Ascending aorta (tissue), 2 donors: ENCODE measurements at regions of chr18 and their contacts with region 1.

Region 1: DNA sequence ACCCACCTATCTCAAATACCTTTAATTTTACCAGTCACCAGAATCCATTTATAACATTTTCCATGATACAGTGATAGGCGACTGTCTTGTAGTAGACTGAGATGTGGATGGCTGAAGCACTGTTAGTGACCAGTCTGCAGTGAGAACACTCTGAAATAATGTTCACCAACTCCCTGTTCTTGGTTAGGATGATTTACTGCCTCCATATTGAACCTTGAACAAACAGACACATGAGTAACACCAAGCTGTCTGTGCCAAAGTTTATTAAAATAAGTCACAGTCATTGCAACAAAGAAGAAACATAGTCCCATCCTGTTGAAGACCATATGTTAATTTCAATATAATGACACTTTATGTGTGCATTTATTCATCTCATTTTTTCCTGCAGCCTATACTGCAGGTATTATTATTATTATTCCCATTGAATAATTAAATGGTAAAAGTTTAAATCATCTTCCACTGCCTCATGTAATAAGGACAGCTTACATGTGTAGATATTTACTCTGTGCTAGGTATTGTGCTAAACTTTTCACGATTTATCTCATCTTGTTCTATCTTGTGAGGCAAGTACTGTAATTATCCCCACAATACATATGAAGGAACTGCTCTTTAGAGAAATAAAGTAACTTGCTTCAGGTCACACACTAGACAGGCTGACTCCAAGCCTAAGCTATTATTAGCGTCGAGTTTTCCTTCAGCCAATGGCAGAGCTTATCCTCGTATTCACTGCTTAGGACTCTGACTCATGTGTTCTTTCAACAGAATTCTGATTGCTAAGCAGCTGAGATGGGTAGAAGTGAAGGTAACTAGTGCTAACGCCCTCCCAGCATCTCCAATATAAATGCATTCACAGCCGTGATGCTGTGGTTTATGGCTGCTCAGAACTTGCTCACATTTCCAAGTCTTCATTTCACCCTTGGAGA is 62.5 kb downstream of the ONECUT2 start:
- DNase-seq: no peak
- H3K4me3 ChIP-seq: no peak overlapping the region
- H3K27ac ChIP-seq: peak overlapping the region; percentile 34 to 55
- H3K4me1 ChIP-seq: peaks cover 0 to 10% of the 10 kb centered on the region in 2 donors
- H3K27me3 ChIP-seq: no peaks in the 10 kb centered on the region
- CTCF ChIP-seq: no peak

Region 2: DNA sequence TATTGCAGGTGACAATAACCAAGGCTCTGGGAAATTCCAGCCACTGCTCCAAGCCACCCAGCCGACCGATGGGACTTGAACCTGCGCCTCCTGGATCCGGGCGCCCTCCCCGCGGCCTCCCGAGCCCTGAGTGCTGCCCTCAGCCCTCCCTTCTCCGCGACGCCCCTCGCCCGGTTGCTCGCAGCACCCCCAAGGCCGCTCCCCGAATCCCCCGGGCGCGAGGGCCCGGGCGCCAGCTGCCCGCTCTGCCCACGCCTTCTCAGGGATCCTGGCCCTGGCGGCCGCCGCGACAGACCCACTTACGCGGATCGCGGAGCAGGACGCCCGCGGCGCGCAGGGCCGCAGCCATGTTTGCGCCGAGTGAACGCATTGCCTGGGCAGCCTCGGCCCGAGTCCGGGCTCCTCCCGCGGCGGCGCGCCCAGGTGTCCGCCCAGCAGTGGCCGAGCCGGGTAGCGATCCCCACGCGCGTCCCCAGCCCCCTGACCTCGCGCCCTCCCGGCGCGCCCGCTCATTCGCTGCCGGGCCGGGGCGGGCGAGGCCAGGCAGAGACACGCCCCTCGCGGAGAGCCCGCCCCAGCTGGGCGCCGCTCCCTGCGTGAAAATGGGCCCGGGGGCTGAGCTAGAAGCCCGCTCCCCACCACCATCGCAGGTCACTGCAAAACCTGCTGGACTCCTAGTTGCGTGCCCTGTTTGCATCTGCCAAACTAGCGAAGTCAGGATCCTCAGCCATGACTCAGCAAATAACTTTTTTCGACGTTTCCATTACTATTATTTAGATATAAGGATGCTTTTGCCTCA is 88.8 kb after region 1 on chr18 and contains the start of gene FECH:
- intact Hi-C with region 1: loop called (anchors 5 kb)
- DNase-seq: peak; percentile 26 to 89
- H3K4me3 ChIP-seq: peak within 1 kb of the TSS; percentile 83 to 90
- H3K27ac ChIP-seq: peak within 1 kb of the TSS; percentile 81 to 87
- H3K4me1 ChIP-seq: peaks cover 5 to 15% of the 10 kb centered on the region in 2 donors
- H3K27me3 ChIP-seq: no peaks in the 10 kb centered on the region
- CTCF ChIP-seq: peak in 1 of 3 experiments; percentile 6
- total RNA-seq, gene FECH: 33.0 TPM